ENCODE measurements at regions of chr10 and their contacts with region 1.

Region 1: GRCh38 chr10:35195361-35196306 is 69.0 kb downstream of the CREM start:
- DNase-seq: peak; percentile 44
- ATAC-seq: peak; percentile 88
- H3K4me3 Mint-ChIP-seq: peak overlapping the region; percentile 92
- H3K27ac Mint-ChIP-seq: peak overlapping the region; percentile 99
- H3K4me1 Mint-ChIP-seq: peaks cover 34% of the 10 kb centered on the region
- H3K27me3 Mint-ChIP-seq: no peaks in the 10 kb centered on the region
- CTCF ChIP-seq: no peak

Region 2: DNA sequence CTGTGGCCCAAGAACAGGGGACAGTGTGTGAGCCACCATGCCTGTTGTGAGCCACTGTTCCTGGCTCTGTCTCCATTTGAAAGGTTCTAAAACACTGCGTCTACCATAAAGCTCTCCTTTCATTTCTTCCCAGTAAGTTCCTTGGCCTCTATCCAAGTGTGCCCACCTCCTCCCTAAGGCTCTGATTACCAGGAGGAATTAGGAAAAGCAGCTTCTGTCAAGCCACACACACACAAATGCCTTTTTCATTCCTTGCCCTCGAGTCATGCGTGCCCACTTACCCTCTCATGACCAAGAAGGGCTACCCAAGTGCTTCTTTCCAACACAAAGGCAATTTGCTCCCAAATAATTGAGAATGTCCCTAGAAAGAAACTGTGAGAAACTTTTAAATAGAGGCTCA is 309.7 kb before region 1 on chr10:
- CTCF ChIA-PET with region 1: no interaction called
- POLR2A ChIA-PET with region 1: no interaction called
- intact Hi-C with region 1: no loop called
- DNase-seq: no peak
- ATAC-seq: no peak
- H3K4me3 Mint-ChIP-seq: no peak overlapping the region
- H3K27ac Mint-ChIP-seq: no peak overlapping the region
- H3K4me1 Mint-ChIP-seq: no peaks in the 10 kb centered on the region
- H3K27me3 Mint-ChIP-seq: no peaks in the 10 kb centered on the region
- CTCF ChIP-seq: no peak

Region 3: GRCh38 chr10:35090162-35090954 is 105.3 kb before region 1 on chr10 and contains the start of gene CUL2:
- CTCF ChIA-PET with region 1: interaction called, 12 read pairs
- POLR2A ChIA-PET with region 1: interaction called, 23 read pairs
- intact Hi-C with region 1: loop called (anchors 1 kb)
- DNase-seq: peak; percentile 89
- ATAC-seq: peak; percentile 96
- H3K4me3 Mint-ChIP-seq: peak within 1 kb of the TSS; percentile 98
- H3K27ac Mint-ChIP-seq: peak within 1 kb of the TSS; percentile 98
- H3K4me1 Mint-ChIP-seq: peaks cover 52% of the 10 kb centered on the region
- H3K27me3 Mint-ChIP-seq: peaks cover under 1% of the 10 kb centered on the region
- CTCF ChIP-seq: no peak
- total RNA-seq, gene CUL2: 32.7 and 33.7 TPM in 2 replicates

Region 4: GRCh38 chr10:35136263-35136815 is 59.3 kb before region 1 on chr10:
- CTCF ChIA-PET with region 1: interaction called, 14 read pairs
- POLR2A ChIA-PET with region 1: interaction called, 570 read pairs
- intact Hi-C with region 1: loop called (anchors 1 kb)
- DNase-seq: no peak
- ATAC-seq: peak; percentile 82
- H3K4me3 Mint-ChIP-seq: peak overlapping the region; percentile 69
- H3K27ac Mint-ChIP-seq: peak overlapping the region; percentile 89
- H3K4me1 Mint-ChIP-seq: peaks cover 45% of the 10 kb centered on the region
- H3K27me3 Mint-ChIP-seq: no peaks in the 10 kb centered on the region
- CTCF ChIP-seq: no peak

Region 5: DNA sequence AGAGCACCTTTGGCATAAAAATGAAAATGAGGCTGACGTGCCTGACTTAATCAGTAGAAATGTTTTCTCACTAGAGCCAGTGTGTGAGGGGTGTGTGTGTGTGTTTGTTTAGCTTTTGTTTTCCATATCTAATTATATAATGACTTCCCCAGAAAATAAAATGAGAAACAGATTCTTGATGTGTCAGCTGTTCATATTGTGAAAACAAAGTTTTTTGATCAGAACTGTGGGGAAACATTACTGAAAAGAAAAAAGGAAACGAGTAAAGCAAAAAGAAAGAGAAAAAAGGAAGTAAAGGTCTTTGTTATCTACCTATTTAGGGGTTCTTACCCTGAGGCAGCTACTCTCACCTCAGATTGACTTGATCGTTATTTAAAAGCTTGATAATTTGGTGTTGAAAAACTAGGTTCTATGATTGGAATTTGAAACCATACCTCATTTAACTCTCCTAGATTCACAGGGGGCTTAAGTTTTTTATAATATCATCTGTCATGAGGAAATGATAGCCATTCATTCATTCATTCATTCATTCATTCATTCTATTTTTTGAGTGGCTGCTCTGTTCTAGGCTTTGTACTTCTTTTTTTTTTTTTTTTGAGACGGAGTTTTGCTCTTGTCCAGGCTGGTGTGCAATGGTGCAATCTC is 11.0 kb before region 1 on chr10:
- CTCF ChIA-PET with region 1: interaction called, 12 read pairs
- POLR2A ChIA-PET with region 1: interaction called, 15 read pairs
- intact Hi-C with region 1: loop called (anchors 1 kb)
- DNase-seq: no peak
- ATAC-seq: peak; percentile 62
- H3K4me3 Mint-ChIP-seq: peak overlapping the region; percentile 44
- H3K27ac Mint-ChIP-seq: peak overlapping the region; percentile 71
- H3K4me1 Mint-ChIP-seq: peaks cover 27% of the 10 kb centered on the region
- H3K27me3 Mint-ChIP-seq: no peaks in the 10 kb centered on the region
- CTCF ChIP-seq: no peak

Region 6: DNA sequence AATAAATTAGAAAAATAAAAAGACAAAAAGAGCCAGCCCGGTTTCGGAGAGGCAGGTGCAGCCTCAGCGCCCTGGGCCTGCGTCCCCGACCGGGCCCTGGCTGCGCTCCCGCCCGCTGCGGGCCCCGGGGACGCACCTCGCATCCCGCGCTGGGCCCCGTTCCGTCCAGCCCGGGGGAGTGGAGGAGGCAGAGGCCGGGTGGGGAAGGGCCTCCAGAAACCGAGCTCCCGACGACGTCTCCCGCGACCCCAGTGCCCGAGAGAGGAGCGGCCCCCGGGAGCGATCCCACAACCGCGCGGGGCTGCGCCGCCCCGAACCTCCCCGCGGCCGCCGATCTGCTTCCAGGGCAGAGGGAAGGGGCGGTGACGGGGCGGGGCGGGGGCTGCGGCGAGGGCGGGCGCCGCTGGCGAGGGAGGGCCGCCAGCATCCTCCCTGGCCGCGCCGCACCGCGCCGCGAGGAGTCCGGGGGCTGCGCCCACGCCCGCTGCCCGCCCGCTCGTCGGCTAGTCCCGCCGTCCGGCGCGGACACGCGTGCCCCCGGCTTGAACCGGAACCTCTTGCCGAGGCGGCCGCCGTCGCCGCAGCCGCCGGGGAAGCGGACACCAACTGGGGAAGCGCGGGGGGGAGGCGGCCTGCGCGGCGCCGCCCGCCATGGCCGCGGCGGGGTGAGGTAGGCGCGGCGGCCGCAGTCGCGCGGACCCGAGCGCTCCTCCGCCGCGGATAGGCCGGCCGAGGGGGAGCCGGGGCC is 140.6 kb after region 1 on chr10 and contains the start of gene CCNY:
- CTCF ChIA-PET with region 1: no interaction called
- POLR2A ChIA-PET with region 1: interaction called, 4 read pairs
- intact Hi-C with region 1: loop called (anchors 2 kb)
- DNase-seq: peak; percentile 79
- ATAC-seq: peak; percentile 86
- H3K4me3 Mint-ChIP-seq: peak within 1 kb of the TSS; percentile 88
- H3K27ac Mint-ChIP-seq: peak within 1 kb of the TSS; percentile 74
- H3K4me1 Mint-ChIP-seq: peaks cover 63% of the 10 kb centered on the region
- H3K27me3 Mint-ChIP-seq: no peaks in the 10 kb centered on the region
- CTCF ChIP-seq: no peak
- total RNA-seq, gene CCNY: 68.5 and 69.2 TPM in 2 replicates